PC-3 (cell line): ENCODE measurements at regions of chr2 and their contacts with region 1.

Region 1: GRCh38 chr2:152175458-152176325 is at the start of gene STAM2:
- DNase-seq: peak; percentile 94
- ATAC-seq: peak; percentile 75
- H3K4me3 ChIP-seq: peak within 1 kb of the TSS; percentile 94
- H3K27ac ChIP-seq: peak within 1 kb of the TSS; percentile 86
- H3K4me1 ChIP-seq: peaks cover 21% of the 10 kb centered on the region
- H3K27me3 ChIP-seq: no peaks in the 10 kb centered on the region
- CTCF ChIP-seq: peak; percentile 90
- total RNA-seq, gene STAM2: 18.0 and 21.0 TPM in 2 replicates

Region 2: GRCh38 chr2:152036611-152037469 is 138.9 kb before region 1 on chr2:
- CTCF ChIA-PET with region 1: interaction called, 3 read pairs
- POLR2A ChIA-PET with region 1: no interaction called
- intact Hi-C with region 1: loop called (anchors 1 kb)
- DNase-seq: peak; percentile 76
- ATAC-seq: peak; percentile 83
- H3K4me3 ChIP-seq: no peak overlapping the region
- H3K27ac ChIP-seq: no peak overlapping the region
- H3K4me1 ChIP-seq: no peaks in the 10 kb centered on the region
- H3K27me3 ChIP-seq: no peaks in the 10 kb centered on the region
- CTCF ChIP-seq: peak; percentile 92

Region 3: DNA sequence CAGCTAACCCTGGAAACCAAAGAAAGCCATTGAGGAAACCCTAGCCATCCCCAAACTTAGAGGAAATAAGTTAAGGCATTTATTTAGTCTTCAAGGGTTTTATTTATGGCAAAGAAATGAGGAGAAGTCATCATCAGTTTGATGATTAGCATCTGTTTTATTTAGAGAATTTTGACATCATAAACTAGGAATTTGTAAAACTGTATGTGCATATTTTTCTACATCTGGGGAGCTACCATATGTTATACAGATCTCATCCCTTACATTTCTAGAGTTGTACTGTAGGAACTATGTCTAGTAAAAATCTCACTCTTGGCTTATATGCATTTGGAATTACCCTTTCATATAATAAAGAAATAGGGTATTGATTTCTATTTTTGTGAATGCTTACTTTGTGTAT is 208.0 kb after region 1 on chr2:
- CTCF ChIA-PET with region 1: no interaction called
- POLR2A ChIA-PET with region 1: no interaction called
- intact Hi-C with region 1: no loop called
- DNase-seq: no peak
- ATAC-seq: no peak
- H3K4me3 ChIP-seq: no peak overlapping the region
- H3K27ac ChIP-seq: no peak overlapping the region
- H3K4me1 ChIP-seq: peaks cover 10% of the 10 kb centered on the region
- H3K27me3 ChIP-seq: no peaks in the 10 kb centered on the region
- CTCF ChIP-seq: no peak

Region 4: DNA sequence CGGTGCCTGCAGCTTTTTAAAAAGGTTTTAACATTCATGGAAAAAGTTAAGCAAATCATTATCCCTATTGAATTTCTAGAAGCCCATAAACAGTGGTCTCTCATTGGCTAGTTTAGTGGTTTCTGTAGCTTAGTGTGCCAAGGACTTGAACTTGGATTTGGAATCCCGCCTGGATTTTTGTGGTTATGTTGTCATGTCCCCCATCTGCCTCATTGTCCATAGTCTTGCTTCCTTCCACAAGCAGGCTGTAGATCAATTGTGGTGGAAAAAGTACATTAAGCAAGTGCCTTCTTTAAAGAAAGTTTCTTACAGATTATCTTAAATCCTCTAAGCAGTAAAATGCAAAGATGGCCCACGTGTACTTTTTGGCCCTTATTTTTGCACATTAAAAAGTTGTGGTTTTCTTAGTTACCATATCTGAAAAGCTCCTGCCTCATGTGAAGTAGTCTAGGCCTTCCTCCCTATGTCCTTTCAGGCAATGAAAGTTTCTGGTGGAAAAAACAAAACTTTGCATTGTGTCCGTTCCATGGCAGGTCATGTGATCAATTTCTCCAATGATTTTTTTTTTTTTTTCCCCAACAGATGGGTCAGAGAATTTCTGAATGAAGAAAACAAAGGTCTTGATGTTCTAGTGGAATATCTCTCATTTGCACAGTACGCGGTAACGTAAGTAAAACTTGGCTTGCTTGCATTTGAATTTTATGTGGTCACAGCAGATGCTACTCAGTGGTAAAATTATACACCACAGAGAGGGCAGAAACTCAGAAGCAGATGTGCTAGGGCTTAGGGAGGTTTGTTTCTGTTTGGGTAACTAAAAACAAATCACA is 382.7 kb after region 1 on chr2:
- CTCF ChIA-PET with region 1: no interaction called
- POLR2A ChIA-PET with region 1: no interaction called
- intact Hi-C with region 1: loop called (anchors 5 kb)
- DNase-seq: peak; percentile 72
- ATAC-seq: peak; percentile 8; the same call in 1 of the 2 replicates
- H3K4me3 ChIP-seq: no peak overlapping the region
- H3K27ac ChIP-seq: peak overlapping the region; percentile 47
- H3K4me1 ChIP-seq: peaks cover 59% of the 10 kb centered on the region
- H3K27me3 ChIP-seq: no peaks in the 10 kb centered on the region
- CTCF ChIP-seq: no peak

Region 5: GRCh38 chr2:152717228-152718075 is 541.8 kb after region 1 on chr2 and contains the start of gene PRPF40A:
- CTCF ChIA-PET with region 1: no interaction called
- POLR2A ChIA-PET with region 1: no interaction called
- intact Hi-C with region 1: loop called (anchors 2 kb)
- DNase-seq: peak; percentile 98
- ATAC-seq: peak; percentile 76
- H3K4me3 ChIP-seq: peak within 1 kb of the TSS; percentile 99
- H3K27ac ChIP-seq: peak within 1 kb of the TSS; percentile 83
- H3K4me1 ChIP-seq: peaks cover 22% of the 10 kb centered on the region
- H3K27me3 ChIP-seq: no peaks in the 10 kb centered on the region
- CTCF ChIP-seq: no peak
- total RNA-seq, gene PRPF40A: 120 and 140 TPM in 2 replicates

Region 6: GRCh38 chr2:153519257-153519875 is 1343.7 kb after region 1 on chr2:
- CTCF ChIA-PET with region 1: no interaction called
- POLR2A ChIA-PET with region 1: no interaction called
- intact Hi-C with region 1: loop called (anchors 5 kb)
- DNase-seq: peak; percentile 77
- ATAC-seq: no peak
- H3K4me3 ChIP-seq: no peak overlapping the region
- H3K27ac ChIP-seq: no peak overlapping the region
- H3K4me1 ChIP-seq: no peaks in the 10 kb centered on the region
- H3K27me3 ChIP-seq: no peaks in the 10 kb centered on the region
- CTCF ChIP-seq: peak; percentile 89